Naive thymus-derived CD4-positive, alpha-beta T cell (primary cell): ENCODE measurements at regions of chr2 and their contacts with region 1.

Region 1: DNA sequence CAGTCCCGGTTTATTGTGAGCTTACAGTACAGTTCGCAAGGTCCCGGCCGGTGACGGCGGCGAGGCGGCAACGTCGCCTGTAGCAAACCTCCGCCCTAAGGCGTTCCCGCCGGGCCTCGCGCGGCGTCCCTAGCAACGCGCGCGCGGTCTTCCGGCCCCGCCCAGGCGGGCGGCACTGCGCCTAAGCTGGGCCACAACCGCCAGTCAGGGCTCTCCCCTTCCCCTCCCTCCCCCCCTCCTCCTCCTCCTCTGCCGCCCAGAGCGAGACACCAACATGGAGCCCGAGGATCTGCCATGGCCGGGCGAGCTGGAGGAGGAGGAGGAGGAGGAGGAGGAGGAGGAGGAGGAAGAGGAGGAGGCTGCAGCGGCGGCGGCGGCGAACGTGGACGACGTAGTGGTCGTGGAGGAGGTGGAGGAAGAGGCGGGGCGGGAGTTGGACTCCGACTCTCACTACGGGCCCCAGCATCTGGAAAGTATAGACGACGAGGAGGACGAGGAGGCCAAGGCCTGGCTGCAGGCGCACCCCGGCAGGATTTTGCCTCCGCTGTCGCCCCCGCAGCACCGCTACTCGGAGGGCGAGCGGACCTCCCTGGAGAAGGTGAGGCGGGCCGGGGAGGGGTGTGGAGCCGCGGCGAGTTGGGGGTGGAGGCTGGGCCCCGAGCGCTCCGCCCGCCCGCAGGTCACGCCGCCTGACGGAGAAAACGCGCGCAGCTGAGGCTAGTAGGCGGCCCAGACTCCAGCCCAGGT is at the start of gene ALMS1:
- DNase-seq: peak; percentile 80 to 91 (median 87)
- ATAC-seq: peak; percentile 94
- H3K4me3 ChIP-seq: peak within 1 kb of the TSS; percentile 85
- H3K4me3 Mint-ChIP-seq: peak within 1 kb of the TSS; percentile 81 to 96 (median 90)
- H3K27ac ChIP-seq: peak within 1 kb of the TSS; percentile 92
- H3K27ac Mint-ChIP-seq: peak within 1 kb of the TSS; percentile 93 to 98 (median 96)
- H3K4me1 ChIP-seq: peaks cover 4 to 18% of the 10 kb centered on the region in 2 donors
- H3K4me1 Mint-ChIP-seq: peaks cover 23 to 47% (median 44%) of the 10 kb centered on the region in 7 donors
- H3K27me3 ChIP-seq: no peaks in the 10 kb centered on the region
- H3K27me3 Mint-ChIP-seq: peaks cover 0 to 23% (median 0%) of the 10 kb centered on the region in 5 donors
- total RNA-seq, gene ALMS1: 16.3 to 46.7 (median 23.5) TPM

Region 2: GRCh38 chr2:72150157-72150865 is 1235.5 kb before region 1 on chr2:
- CTCF ChIA-PET with region 1: no interaction called
- POLR2A ChIA-PET with region 1: no interaction called
- intact Hi-C with region 1: loop called in 1 of 2 experiments (anchors 5 kb)
- DNase-seq: peak in 7 of 9 donors; percentile 26 to 64 (median 53)
- ATAC-seq: peak; percentile 74
- H3K4me3 ChIP-seq: peak overlapping the region; percentile 64
- H3K4me3 Mint-ChIP-seq: peak overlapping the region; percentile 64 to 89 (median 78)
- H3K27ac ChIP-seq: no peak overlapping the region
- H3K27ac Mint-ChIP-seq: peak overlapping the region in 2 of 9 donors; percentile 7 to 54
- H3K4me1 ChIP-seq: peaks cover 4 to 12% of the 10 kb centered on the region in 2 donors
- H3K4me1 Mint-ChIP-seq: peaks cover 29 to 43% (median 36%) of the 10 kb centered on the region in 7 donors
- H3K27me3 ChIP-seq: peaks cover 6 to 22% of the 10 kb centered on the region in 2 donors
- H3K27me3 Mint-ChIP-seq: peaks cover 59 to 73% (median 67%) of the 10 kb centered on the region in 5 donors

Region 3: GRCh38 chr2:73212448-73213176 is 173.2 kb before region 1 on chr2:
- CTCF ChIA-PET with region 1: no interaction called
- POLR2A ChIA-PET with region 1: no interaction called
- intact Hi-C with region 1: loop called (anchors 1 kb)
- DNase-seq: peak; percentile 48 to 71 (median 64)
- ATAC-seq: peak; percentile 76
- H3K4me3 ChIP-seq: no peak overlapping the region
- H3K4me3 Mint-ChIP-seq: peak overlapping the region in 8 of 10 donors; percentile 15 to 97 (median 62)
- H3K27ac ChIP-seq: no peak overlapping the region
- H3K27ac Mint-ChIP-seq: peak overlapping the region in 6 of 9 donors; percentile 40 to 98 (median 91)
- H3K4me1 ChIP-seq: peaks cover 14 to 18% of the 10 kb centered on the region in 2 donors
- H3K4me1 Mint-ChIP-seq: peaks cover 16 to 44% (median 36%) of the 10 kb centered on the region in 7 donors
- H3K27me3 ChIP-seq: no peaks in the 10 kb centered on the region
- H3K27me3 Mint-ChIP-seq: peaks cover 4 to 8% (median 7%) of the 10 kb centered on the region in 5 donors

Region 4: GRCh38 chr2:73249636-73250035 is 136.1 kb before region 1 on chr2:
- CTCF ChIA-PET with region 1: no interaction called
- POLR2A ChIA-PET with region 1: no interaction called
- intact Hi-C with region 1: no loop called
- DNase-seq: no peak
- ATAC-seq: no peak
- H3K4me3 ChIP-seq: no peak overlapping the region
- H3K4me3 Mint-ChIP-seq: no peak overlapping the region
- H3K27ac ChIP-seq: no peak overlapping the region
- H3K27ac Mint-ChIP-seq: peak overlapping the region in 3 of 9 donors; percentile 33 to 60 (median 44)
- H3K4me1 ChIP-seq: no peaks in the 10 kb centered on the region
- H3K4me1 Mint-ChIP-seq: peaks cover 0 to 15% (median under 1%) of the 10 kb centered on the region in 7 donors
- H3K27me3 ChIP-seq: no peaks in the 10 kb centered on the region
- H3K27me3 Mint-ChIP-seq: no peaks in the 10 kb centered on the region

Region 5: DNA sequence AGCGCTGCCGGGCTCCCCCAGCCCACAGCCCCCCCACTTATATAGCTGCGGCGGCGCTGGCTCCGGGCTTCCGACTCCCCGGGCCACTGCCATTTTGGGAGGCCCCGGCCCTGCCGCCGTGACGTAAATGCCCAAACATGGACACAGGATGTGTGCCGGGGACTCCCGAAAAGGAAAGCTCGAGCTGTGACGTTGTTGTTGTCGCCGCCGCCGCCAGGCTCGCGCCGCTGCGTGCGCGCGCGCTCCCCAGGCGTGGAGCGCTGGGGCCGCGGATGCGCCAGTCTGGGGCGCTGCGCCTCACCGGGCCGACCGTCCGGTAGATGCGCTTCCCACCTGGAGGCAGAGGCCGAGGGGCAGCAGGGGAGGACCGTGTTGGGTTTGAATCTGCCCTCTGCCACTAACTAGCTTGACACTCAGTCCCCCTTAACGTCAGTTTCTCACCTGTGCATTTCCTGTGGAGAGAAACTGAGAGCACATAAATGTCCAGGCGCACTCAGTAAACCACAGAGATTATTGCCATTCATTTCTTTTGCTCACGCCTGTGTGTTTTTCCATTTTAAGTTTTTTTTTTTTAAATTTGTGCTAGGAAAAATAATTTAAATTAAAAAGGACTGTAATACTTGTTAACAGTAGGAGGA is 92.1 kb before region 1 on chr2 and contains the start of gene EGR4:
- CTCF ChIA-PET with region 1: no interaction called
- POLR2A ChIA-PET with region 1: no interaction called
- intact Hi-C with region 1: loop called (anchors 1 kb)
- DNase-seq: peak; percentile 70 to 96 (median 88)
- ATAC-seq: peak; percentile 94
- H3K4me3 ChIP-seq: peak within 1 kb of the TSS; percentile 72
- H3K4me3 Mint-ChIP-seq: peak within 1 kb of the TSS; percentile 59 to 82 (median 72)
- H3K27ac ChIP-seq: no peak within 1 kb of the TSS
- H3K27ac Mint-ChIP-seq: peak within 1 kb of the TSS in 4 of 9 donors; percentile 9 to 81 (median 30)
- H3K4me1 ChIP-seq: peaks cover 17 to 18% of the 10 kb centered on the region in 2 donors
- H3K4me1 Mint-ChIP-seq: peaks cover 7 to 25% (median 14%) of the 10 kb centered on the region in 7 donors
- H3K27me3 ChIP-seq: peaks cover 11 to 25% of the 10 kb centered on the region in 2 donors
- H3K27me3 Mint-ChIP-seq: peaks cover 48 to 83% (median 66%) of the 10 kb centered on the region in 5 donors
- total RNA-seq, gene EGR4: 0.15 to 0.16 (median 0.15) TPM in 3 of 5 experiments, not detected in the others

Region 6: DNA sequence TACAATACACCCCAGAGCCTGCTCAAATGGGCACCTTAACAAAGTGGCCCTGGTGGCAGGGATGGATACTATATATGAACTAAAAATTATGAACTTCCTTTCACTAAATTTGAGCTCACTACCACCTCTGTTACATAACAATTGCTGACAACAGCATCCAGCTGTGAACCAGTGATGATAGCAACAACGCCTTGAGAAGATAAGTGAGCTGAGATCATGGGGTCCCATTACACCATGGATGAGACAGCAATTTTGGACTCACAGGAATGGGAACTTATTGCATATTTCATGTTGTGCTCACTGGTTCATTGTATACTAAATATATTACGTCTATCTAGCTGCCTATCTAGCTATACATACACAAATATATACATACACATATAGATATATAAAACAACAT is 17.0 kb before region 1 on chr2:
- CTCF ChIA-PET with region 1: no interaction called
- POLR2A ChIA-PET with region 1: no interaction called
- intact Hi-C with region 1: no loop called
- DNase-seq: no peak
- ATAC-seq: no peak
- H3K4me3 ChIP-seq: no peak overlapping the region
- H3K4me3 Mint-ChIP-seq: no peak overlapping the region
- H3K27ac ChIP-seq: no peak overlapping the region
- H3K27ac Mint-ChIP-seq: no peak overlapping the region
- H3K4me1 ChIP-seq: no peaks in the 10 kb centered on the region
- H3K4me1 Mint-ChIP-seq: no peaks in the 10 kb centered on the region
- H3K27me3 ChIP-seq: no peaks in the 10 kb centered on the region
- H3K27me3 Mint-ChIP-seq: peaks cover 4 to 24% (median 11%) of the 10 kb centered on the region in 5 donors

Region 7: GRCh38 chr2:74421221-74421870 is 1035.6 kb after region 1 on chr2 and contains the starts of genes C2orf81 and WDR54:
- CTCF ChIA-PET with region 1: no interaction called
- POLR2A ChIA-PET with region 1: no interaction called
- intact Hi-C with region 1: loop called in 1 of 2 experiments (anchors 10 kb)
- DNase-seq: peak; percentile 86 to 96 (median 95)
- ATAC-seq: peak; percentile 97
- H3K4me3 ChIP-seq: peak within 1 kb of the TSS; percentile 96
- H3K4me3 Mint-ChIP-seq: peak within 1 kb of the TSS; percentile 90 to 100 (median 98)
- H3K27ac ChIP-seq: peak within 1 kb of the TSS; percentile 97
- H3K27ac Mint-ChIP-seq: peak within 1 kb of the TSS; percentile 96 to 100 (median 99)
- H3K4me1 ChIP-seq: peaks cover 4 to 19% of the 10 kb centered on the region in 2 donors
- H3K4me1 Mint-ChIP-seq: peaks cover 14 to 44% (median 36%) of the 10 kb centered on the region in 7 donors
- H3K27me3 ChIP-seq: no peaks in the 10 kb centered on the region
- H3K27me3 Mint-ChIP-seq: no peaks in the 10 kb centered on the region
- total RNA-seq, gene C2orf81: 4.3 to 10.5 (median 6.8) TPM
- total RNA-seq, gene WDR54: 26.5 to 78.5 (median 30.8) TPM

Region 8: GRCh38 chr2:74833418-74834233 is 1447.9 kb after region 1 on chr2 and contains the start of gene HK2:
- CTCF ChIA-PET with region 1: no interaction called
- POLR2A ChIA-PET with region 1: no interaction called
- intact Hi-C with region 1: loop called (anchors 2 to 10 kb)
- DNase-seq: peak; percentile 68 to 87 (median 78)
- ATAC-seq: peak; percentile 91
- H3K4me3 ChIP-seq: peak within 1 kb of the TSS; percentile 72
- H3K4me3 Mint-ChIP-seq: peak within 1 kb of the TSS; percentile 89 to 97 (median 94)
- H3K27ac ChIP-seq: peak within 1 kb of the TSS; percentile 67
- H3K27ac Mint-ChIP-seq: peak within 1 kb of the TSS; percentile 35 to 95 (median 91)
- H3K4me1 ChIP-seq: peaks cover 14 to 32% of the 10 kb centered on the region in 2 donors
- H3K4me1 Mint-ChIP-seq: peaks cover 28 to 49% (median 33%) of the 10 kb centered on the region in 7 donors
- H3K27me3 ChIP-seq: no peaks in the 10 kb centered on the region
- H3K27me3 Mint-ChIP-seq: peaks cover 0 to 7% (median 0%) of the 10 kb centered on the region in 5 donors
- total RNA-seq, gene HK2: 11.1 to 74.6 (median 17.7) TPM